ENCODE measurements at regions of chr4 and their contacts with region 1.

Region 1: GRCh38 chr4:57020467-57021101 is 41.9 kb downstream of the POLR2B start:
- H3K4me3 Mint-ChIP-seq: no peak overlapping the region
- H3K27ac Mint-ChIP-seq: no peak overlapping the region
- H3K4me1 Mint-ChIP-seq: no peaks in the 10 kb centered on the region
- H3K27me3 Mint-ChIP-seq: no peaks in the 10 kb centered on the region

Region 2: DNA sequence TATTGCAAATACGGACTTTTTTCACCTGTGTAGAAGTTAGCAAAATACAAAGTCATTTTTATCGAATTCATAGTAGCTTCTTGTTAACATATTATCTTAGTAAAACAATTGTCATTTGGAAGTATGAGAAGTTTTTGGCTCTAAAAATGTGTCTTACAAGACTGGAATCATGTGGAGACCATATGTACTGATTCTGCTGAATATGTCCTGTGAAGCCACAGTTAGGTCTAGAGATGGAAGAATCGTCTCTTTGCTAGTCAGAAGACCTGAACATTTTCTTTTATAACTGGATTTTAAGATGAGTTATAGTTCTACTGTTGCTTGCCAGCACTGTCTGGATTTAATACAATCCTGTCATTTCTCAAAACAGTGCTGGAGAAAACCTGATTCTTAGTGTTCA is 1595.8 kb before region 1 on chr4:
- intact Hi-C with region 1: loop called (anchors 10 kb)
- H3K4me3 Mint-ChIP-seq: no peak overlapping the region
- H3K27ac Mint-ChIP-seq: no peak overlapping the region
- H3K4me1 Mint-ChIP-seq: peaks cover 7% of the 10 kb centered on the region
- H3K27me3 Mint-ChIP-seq: no peaks in the 10 kb centered on the region

Region 3: GRCh38 chr4:55887594-55887993 is 1133.0 kb before region 1 on chr4:
- intact Hi-C with region 1: loop called (anchors 10 kb)
- H3K4me3 Mint-ChIP-seq: no peak overlapping the region
- H3K27ac Mint-ChIP-seq: no peak overlapping the region
- H3K4me1 Mint-ChIP-seq: no peaks in the 10 kb centered on the region
- H3K27me3 Mint-ChIP-seq: no peaks in the 10 kb centered on the region

Region 4: DNA sequence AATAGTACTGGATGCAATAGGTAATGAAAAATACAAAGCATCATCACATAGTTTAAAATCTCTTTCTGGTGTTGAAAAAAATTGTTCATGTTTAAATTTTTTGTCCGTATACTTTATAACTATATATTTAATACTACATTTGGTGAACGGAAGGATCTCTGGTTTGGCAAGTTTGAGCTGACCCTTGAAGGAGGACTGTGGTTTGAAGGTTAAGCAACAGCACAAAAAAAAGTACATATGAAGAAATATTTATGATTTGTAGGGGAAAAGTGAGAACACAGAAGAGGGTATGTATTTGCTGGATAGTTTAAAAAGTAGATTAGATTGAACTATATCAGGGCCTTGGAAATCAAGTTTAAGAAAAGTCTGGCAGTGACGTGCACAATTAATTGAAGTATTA is 539.9 kb before region 1 on chr4:
- intact Hi-C with region 1: loop called (anchors 5 kb)
- H3K4me3 Mint-ChIP-seq: no peak overlapping the region
- H3K27ac Mint-ChIP-seq: no peak overlapping the region
- H3K4me1 Mint-ChIP-seq: no peaks in the 10 kb centered on the region
- H3K27me3 Mint-ChIP-seq: no peaks in the 10 kb centered on the region

Region 5: GRCh38 chr4:56817840-56818491 is 202.6 kb before region 1 on chr4:
- intact Hi-C with region 1: no loop called
- H3K4me3 Mint-ChIP-seq: no peak overlapping the region
- H3K27ac Mint-ChIP-seq: no peak overlapping the region
- H3K4me1 Mint-ChIP-seq: peaks cover 25% of the 10 kb centered on the region
- H3K27me3 Mint-ChIP-seq: peaks cover 31% of the 10 kb centered on the region

Region 6: DNA sequence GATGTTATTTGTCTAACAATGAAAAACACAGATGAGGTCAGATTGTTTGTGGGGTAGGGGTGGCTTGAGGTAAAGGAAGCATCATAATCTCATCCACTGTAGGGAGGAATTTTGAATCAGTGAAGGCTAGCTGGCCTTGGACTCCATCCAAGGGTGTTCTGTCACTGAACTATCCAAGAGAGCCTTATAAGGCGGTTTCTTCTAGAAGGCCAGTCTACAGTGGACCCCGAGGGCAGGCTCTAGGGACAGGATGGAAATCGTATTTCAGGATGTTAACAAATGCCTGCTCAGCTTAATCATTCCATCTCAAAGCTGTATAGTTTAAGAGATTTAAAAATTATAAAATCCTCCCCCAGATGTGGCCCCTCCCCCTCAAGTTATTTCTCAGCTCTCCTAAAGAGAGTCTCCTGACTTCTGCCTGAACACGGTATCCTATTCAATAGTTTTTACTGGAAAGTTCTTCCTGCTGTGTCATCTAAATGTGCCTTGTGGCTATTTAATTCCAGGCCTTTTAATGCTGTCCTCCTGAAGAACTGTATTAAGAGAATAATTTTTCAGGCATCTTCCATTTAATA is 81.6 kb after region 1 on chr4:
- intact Hi-C with region 1: no loop called
- H3K4me3 Mint-ChIP-seq: no peak overlapping the region
- H3K27ac Mint-ChIP-seq: no peak overlapping the region
- H3K4me1 Mint-ChIP-seq: peaks cover 5% of the 10 kb centered on the region
- H3K27me3 Mint-ChIP-seq: no peaks in the 10 kb centered on the region

Measured in dendritic cell treated with granulocyte-macrophage colony-stimulating factor and Interleukin-4, amounts not matched to agents 40 ng/mL and 50 ng/mL, for 4 days (primary cell).